ENCODE measurements at regions of chr6 and their contacts with region 1.

Region 1: GRCh38 chr6:35240840-35241801 is 18.4 kb upstream of the ZNF76 start:
- DNase-seq: peak; percentile 82
- H3K4me3 Mint-ChIP-seq: no peak overlapping the region
- H3K27ac Mint-ChIP-seq: no peak overlapping the region
- H3K4me1 Mint-ChIP-seq: no peaks in the 10 kb centered on the region
- H3K27me3 Mint-ChIP-seq: no peaks in the 10 kb centered on the region

Region 2: GRCh38 chr6:34986845-34987246 is 254.3 kb before region 1 on chr6:
- CTCF ChIA-PET with region 1: interaction called, 24 read pairs
- POLR2A ChIA-PET with region 1: no interaction called
- DNase-seq: peak; percentile 71
- H3K4me3 Mint-ChIP-seq: no peak overlapping the region
- H3K27ac Mint-ChIP-seq: no peak overlapping the region
- H3K4me1 Mint-ChIP-seq: no peaks in the 10 kb centered on the region
- H3K27me3 Mint-ChIP-seq: no peaks in the 10 kb centered on the region

Region 3: GRCh38 chr6:35139908-35140655 is 101.0 kb before region 1 on chr6:
- CTCF ChIA-PET with region 1: interaction called, 48 read pairs
- POLR2A ChIA-PET with region 1: no interaction called
- DNase-seq: peak; percentile 57
- H3K4me3 Mint-ChIP-seq: no peak overlapping the region
- H3K27ac Mint-ChIP-seq: no peak overlapping the region
- H3K4me1 Mint-ChIP-seq: peaks cover 23% of the 10 kb centered on the region
- H3K27me3 Mint-ChIP-seq: peaks cover 22% of the 10 kb centered on the region

Region 4: DNA sequence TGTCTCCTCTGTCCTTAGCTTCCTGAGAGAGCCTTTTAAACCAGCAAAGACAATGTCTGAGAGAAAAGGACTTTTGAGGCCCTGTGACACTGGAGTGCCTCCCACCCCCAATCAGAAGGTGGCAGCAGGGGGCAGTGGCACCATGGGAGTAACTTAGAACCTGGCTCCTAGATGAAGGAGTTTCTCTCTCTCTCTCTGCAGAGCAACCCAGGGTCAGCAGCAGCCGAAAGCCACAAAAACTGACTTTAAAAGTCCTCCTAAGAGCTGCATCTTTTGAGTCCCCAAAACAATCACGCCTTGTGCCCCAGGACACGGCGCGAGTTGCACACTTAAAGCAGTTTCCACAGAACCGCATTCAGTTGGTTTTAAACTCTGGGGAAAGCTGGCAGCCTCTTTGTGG is 94.7 kb before region 1 on chr6:
- CTCF ChIA-PET with region 1: interaction called, 48 read pairs
- POLR2A ChIA-PET with region 1: interaction called, 5 read pairs
- DNase-seq: peak; percentile 48
- H3K4me3 Mint-ChIP-seq: no peak overlapping the region
- H3K27ac Mint-ChIP-seq: no peak overlapping the region
- H3K4me1 Mint-ChIP-seq: peaks cover 42% of the 10 kb centered on the region
- H3K27me3 Mint-ChIP-seq: peaks cover 7% of the 10 kb centered on the region

Region 5: GRCh38 chr6:35203680-35204079 is 37.4 kb before region 1 on chr6:
- CTCF ChIA-PET with region 1: interaction called, 45 read pairs
- POLR2A ChIA-PET with region 1: interaction called, 3 read pairs
- DNase-seq: no peak
- H3K4me3 Mint-ChIP-seq: no peak overlapping the region
- H3K27ac Mint-ChIP-seq: no peak overlapping the region
- H3K4me1 Mint-ChIP-seq: no peaks in the 10 kb centered on the region
- H3K27me3 Mint-ChIP-seq: peaks cover 55% of the 10 kb centered on the region

Region 6: DNA sequence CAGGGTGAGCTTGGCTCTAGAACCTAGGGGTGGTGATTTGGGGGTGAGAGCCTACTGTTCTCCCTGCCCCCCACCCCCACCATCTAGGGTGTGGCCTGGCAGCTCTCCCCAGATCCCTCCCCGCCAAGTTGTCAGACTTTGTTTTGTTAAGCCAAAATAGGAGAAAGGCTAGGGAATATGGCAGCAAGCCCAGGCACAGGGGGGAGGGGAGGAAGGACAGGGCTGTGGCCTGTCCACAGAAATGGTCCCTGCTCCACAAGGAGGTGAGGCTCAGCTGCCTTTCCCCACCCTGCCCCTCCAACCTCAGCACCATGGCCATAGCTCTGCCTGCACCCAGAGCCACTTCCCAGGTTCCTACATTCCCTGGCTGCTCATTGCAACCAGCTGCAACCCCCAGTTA is 10.2 kb before region 1 on chr6:
- CTCF ChIA-PET with region 1: interaction called, 31 read pairs
- POLR2A ChIA-PET with region 1: interaction called, 9 read pairs
- DNase-seq: no peak
- H3K4me3 Mint-ChIP-seq: no peak overlapping the region
- H3K27ac Mint-ChIP-seq: no peak overlapping the region
- H3K4me1 Mint-ChIP-seq: no peaks in the 10 kb centered on the region
- H3K27me3 Mint-ChIP-seq: no peaks in the 10 kb centered on the region

Region 7: GRCh38 chr6:35259194-35259947 is 18.2 kb after region 1 on chr6 and contains the start of gene ZNF76:
- CTCF ChIA-PET with region 1: interaction called, 16 read pairs
- POLR2A ChIA-PET with region 1: interaction called, 4 read pairs
- DNase-seq: peak; percentile 91
- H3K4me3 Mint-ChIP-seq: peak within 1 kb of the TSS; percentile 92
- H3K27ac Mint-ChIP-seq: peak within 1 kb of the TSS; percentile 79
- H3K4me1 Mint-ChIP-seq: peaks cover 50% of the 10 kb centered on the region
- H3K27me3 Mint-ChIP-seq: no peaks in the 10 kb centered on the region
- total RNA-seq, gene ZNF76: 42.6 to 42.7 TPM

Region 8: GRCh38 chr6:35415065-35415991 is 174.2 kb after region 1 on chr6:
- CTCF ChIA-PET with region 1: no interaction called
- POLR2A ChIA-PET with region 1: no interaction called
- DNase-seq: peak; percentile 40
- H3K4me3 Mint-ChIP-seq: no peak overlapping the region
- H3K27ac Mint-ChIP-seq: peak overlapping the region; percentile 52
- H3K4me1 Mint-ChIP-seq: peaks cover 49% of the 10 kb centered on the region
- H3K27me3 Mint-ChIP-seq: no peaks in the 10 kb centered on the region

Region 9: GRCh38 chr6:35876902-35877301 is 635.8 kb after region 1 on chr6:
- CTCF ChIA-PET with region 1: no interaction called
- POLR2A ChIA-PET with region 1: no interaction called
- DNase-seq: no peak
- H3K4me3 Mint-ChIP-seq: no peak overlapping the region
- H3K27ac Mint-ChIP-seq: no peak overlapping the region
- H3K4me1 Mint-ChIP-seq: peaks cover 5% of the 10 kb centered on the region
- H3K27me3 Mint-ChIP-seq: no peaks in the 10 kb centered on the region

Measured in activated CD4-positive, alpha-beta memory T cell treated with anti-CD3 and anti-CD28 coated beads, Interleukin-2, amount 10 ng/mL, durations not matched to agents 7 days and 5 days (primary cell).